Mammary epithelial cell (primary cell): ENCODE measurements at regions of chr6 and their contacts with region 1.

Region 1: DNA sequence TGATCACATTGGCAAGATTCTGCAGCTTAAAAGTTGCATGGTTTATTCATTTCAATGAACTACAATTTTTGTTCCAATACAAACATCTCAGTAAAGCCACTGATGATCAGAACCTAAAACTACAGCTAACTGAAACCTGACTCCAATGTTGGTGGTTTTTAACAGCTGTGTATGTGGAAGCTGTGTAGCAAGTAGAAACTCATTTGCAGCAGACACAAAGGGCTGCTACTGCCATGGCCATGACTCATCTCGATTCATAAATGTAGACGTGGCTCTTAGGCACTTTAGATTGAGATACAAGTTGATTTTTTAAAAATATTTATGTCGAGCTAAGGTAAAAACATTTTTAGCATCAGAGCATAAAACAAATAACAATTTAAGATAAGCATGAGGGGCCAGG is 19.5 kb upstream of the MAP3K4 start:
- DNase-seq: peak; percentile 93
- H3K4me3 ChIP-seq: no peak overlapping the region
- H3K27ac ChIP-seq: peak overlapping the region; percentile 59
- H3K4me1 ChIP-seq: peaks cover 35% of the 10 kb centered on the region
- H3K27me3 ChIP-seq: no peaks in the 10 kb centered on the region
- CTCF ChIP-seq: no peak

Region 2: DNA sequence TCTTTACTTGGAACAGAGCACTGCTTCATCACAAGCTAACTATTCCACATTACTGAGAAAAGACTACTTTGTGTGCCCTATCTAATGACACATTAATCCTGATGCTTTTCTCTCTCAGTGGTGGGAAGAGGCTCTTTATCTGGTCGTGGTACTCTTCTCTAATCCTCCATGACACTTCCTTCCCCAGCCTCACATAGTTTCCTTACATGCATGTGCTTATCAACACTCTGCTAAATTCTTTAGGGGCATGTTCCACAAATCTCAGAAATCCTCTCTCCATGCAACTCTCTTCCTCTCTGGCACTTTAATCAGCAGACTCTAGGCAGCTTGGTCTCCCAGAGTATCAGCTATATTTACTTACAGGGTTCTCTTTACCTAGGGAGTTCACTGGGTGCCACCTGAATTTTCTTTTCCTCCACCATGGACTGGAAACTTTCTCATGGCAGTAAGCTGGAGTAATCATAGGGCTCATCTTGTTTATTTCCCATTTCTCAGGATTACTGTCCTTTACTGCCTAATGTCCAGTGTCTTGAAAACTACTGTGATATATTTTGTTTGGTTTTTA is 686.5 kb before region 1 on chr6:
- CTCF ChIA-PET with region 1: no interaction called
- dilution Hi-C with region 1: no loop called
- in situ Hi-C with region 1: no loop called
- intact Hi-C with region 1: no loop called
- DNase-seq: no peak
- H3K4me3 ChIP-seq: no peak overlapping the region
- H3K27ac ChIP-seq: no peak overlapping the region
- H3K4me1 ChIP-seq: no peaks in the 10 kb centered on the region
- H3K27me3 ChIP-seq: no peaks in the 10 kb centered on the region
- CTCF ChIP-seq: no peak

Region 3: GRCh38 chr6:160940197-160940596 is 31.9 kb before region 1 on chr6:
- CTCF ChIA-PET with region 1: no interaction called
- dilution Hi-C with region 1: no loop called
- in situ Hi-C with region 1: no loop called
- intact Hi-C with region 1: no loop called
- DNase-seq: no peak
- H3K4me3 ChIP-seq: no peak overlapping the region
- H3K27ac ChIP-seq: no peak overlapping the region
- H3K4me1 ChIP-seq: no peaks in the 10 kb centered on the region
- H3K27me3 ChIP-seq: no peaks in the 10 kb centered on the region
- CTCF ChIP-seq: no peak

Region 4: DNA sequence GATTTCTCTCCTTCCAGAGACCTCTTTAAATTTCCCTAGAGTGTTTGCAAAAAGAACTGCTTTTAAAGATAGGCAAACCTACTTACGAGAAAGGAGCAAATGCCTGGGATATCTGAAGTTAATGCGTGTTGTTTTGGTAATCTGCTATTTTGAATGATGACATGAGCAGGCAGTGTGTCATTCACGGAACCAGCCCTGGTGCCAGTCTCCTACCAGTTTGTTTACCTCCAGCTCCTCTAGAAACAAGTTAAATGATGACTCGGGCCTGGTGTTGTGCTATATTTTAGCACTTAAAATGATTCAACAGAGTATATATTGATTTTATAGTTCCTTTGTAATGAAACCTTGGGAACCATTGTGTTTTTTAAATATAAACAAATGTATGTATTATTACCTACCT is 21.6 kb before region 1 on chr6:
- CTCF ChIA-PET with region 1: no interaction called
- dilution Hi-C with region 1: no loop called
- in situ Hi-C with region 1: no loop called
- intact Hi-C with region 1: loop called (anchors 1 kb)
- DNase-seq: peak; percentile 70
- H3K4me3 ChIP-seq: no peak overlapping the region
- H3K27ac ChIP-seq: peak overlapping the region; percentile 72
- H3K4me1 ChIP-seq: peaks cover 16% of the 10 kb centered on the region
- H3K27me3 ChIP-seq: no peaks in the 10 kb centered on the region
- CTCF ChIP-seq: no peak

Region 5: GRCh38 chr6:161038229-161039031 is 66.3 kb after region 1 on chr6:
- CTCF ChIA-PET with region 1: no interaction called
- dilution Hi-C with region 1: loop called (anchors 10 kb)
- in situ Hi-C with region 1: no loop called
- intact Hi-C with region 1: loop called (anchors 2 kb)
- DNase-seq: peak; percentile 96
- H3K4me3 ChIP-seq: no peak overlapping the region
- H3K27ac ChIP-seq: peak overlapping the region; percentile 93
- H3K4me1 ChIP-seq: peaks cover 32% of the 10 kb centered on the region
- H3K27me3 ChIP-seq: no peaks in the 10 kb centered on the region
- CTCF ChIP-seq: peak; percentile 36 to 51

Region 6: DNA sequence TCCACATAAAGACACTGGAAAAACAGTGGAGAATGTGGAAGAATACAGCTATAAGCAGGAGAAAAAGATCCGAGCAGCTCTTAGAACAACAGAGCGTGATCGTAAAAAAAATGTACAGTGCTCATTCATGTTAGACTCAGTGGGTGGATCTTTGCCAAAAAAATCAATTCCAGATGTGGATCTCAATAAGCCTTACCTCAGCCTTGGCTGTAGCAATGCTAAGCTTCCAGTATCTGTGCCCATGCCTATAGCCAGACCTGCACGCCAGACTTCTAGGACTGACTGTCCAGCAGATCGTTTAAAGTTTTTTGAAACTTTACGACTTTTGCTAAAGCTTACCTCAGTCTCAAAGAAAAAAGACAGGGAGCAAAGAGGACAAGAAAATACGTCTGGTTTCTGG is 76.5 kb after region 1 on chr6:
- CTCF ChIA-PET with region 1: no interaction called
- dilution Hi-C with region 1: loop called (anchors 10 kb)
- in situ Hi-C with region 1: no loop called
- intact Hi-C with region 1: no loop called
- DNase-seq: no peak
- H3K4me3 ChIP-seq: no peak overlapping the region
- H3K27ac ChIP-seq: no peak overlapping the region
- H3K4me1 ChIP-seq: peaks cover 7% of the 10 kb centered on the region
- H3K27me3 ChIP-seq: no peaks in the 10 kb centered on the region
- CTCF ChIP-seq: no peak

Region 7: DNA sequence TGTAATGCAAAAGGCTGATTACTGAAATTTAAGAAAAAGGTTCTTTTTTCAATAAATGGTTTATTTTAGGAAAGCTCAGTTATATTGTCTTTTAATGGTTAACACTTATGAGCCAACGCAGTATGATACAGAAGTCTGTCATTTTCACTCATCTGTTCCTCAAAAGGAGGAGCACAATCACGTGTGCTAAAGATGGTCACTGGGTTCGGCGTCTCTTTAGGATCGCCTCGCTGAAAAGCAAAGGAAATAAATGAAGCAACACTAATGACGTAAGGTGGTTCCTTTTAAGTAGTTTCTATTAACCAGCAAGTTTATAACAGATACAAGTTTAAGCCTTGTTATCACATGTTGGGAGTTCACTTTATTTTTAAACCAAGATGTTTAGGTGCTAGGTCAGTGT is 145.2 kb after region 1 on chr6:
- CTCF ChIA-PET with region 1: no interaction called
- dilution Hi-C with region 1: no loop called
- in situ Hi-C with region 1: no loop called
- intact Hi-C with region 1: no loop called
- DNase-seq: no peak
- H3K4me3 ChIP-seq: no peak overlapping the region
- H3K27ac ChIP-seq: no peak overlapping the region
- H3K4me1 ChIP-seq: no peaks in the 10 kb centered on the region
- H3K27me3 ChIP-seq: no peaks in the 10 kb centered on the region
- CTCF ChIP-seq: no peak

Region 8: GRCh38 chr6:161139766-161140553 is 167.8 kb after region 1 on chr6:
- CTCF ChIA-PET with region 1: no interaction called
- dilution Hi-C with region 1: loop called (anchors 10 kb)
- in situ Hi-C with region 1: no loop called
- intact Hi-C with region 1: no loop called
- DNase-seq: no peak
- H3K4me3 ChIP-seq: no peak overlapping the region
- H3K27ac ChIP-seq: no peak overlapping the region
- H3K4me1 ChIP-seq: peaks cover 18% of the 10 kb centered on the region
- H3K27me3 ChIP-seq: no peaks in the 10 kb centered on the region
- CTCF ChIP-seq: no peak

Region 9: GRCh38 chr6:162377735-162378134 is 1405.6 kb after region 1 on chr6:
- CTCF ChIA-PET with region 1: no interaction called
- dilution Hi-C with region 1: no loop called
- in situ Hi-C with region 1: no loop called
- intact Hi-C with region 1: no loop called
- DNase-seq: no peak
- H3K4me3 ChIP-seq: no peak overlapping the region
- H3K27ac ChIP-seq: no peak overlapping the region
- H3K4me1 ChIP-seq: no peaks in the 10 kb centered on the region
- H3K27me3 ChIP-seq: no peaks in the 10 kb centered on the region
- CTCF ChIP-seq: no peak